PC-9 (cell line): ENCODE measurements at regions of chr7 and their contacts with region 1.

Region 1: DNA sequence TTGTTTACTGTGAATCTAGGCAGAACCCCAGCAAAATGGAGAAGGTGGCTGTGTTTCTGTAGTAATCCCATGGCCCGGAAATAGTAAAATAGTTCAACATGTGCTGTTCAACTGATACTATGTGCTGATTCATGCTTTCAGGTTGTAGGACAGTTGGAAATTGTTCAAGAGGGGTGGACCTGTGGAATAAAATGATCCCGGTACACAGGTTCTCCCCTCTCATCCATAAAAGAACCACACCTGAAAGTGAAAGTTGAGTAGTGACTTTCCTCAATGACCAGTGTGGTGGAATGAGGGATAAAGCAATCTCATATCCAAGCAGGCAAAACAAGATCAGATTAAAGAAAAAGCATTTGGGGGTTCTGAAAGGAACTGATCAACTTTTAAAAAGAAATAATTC is 177.1 kb downstream of the POU6F2 start:
- DNase-seq: no peak
- H3K4me3 ChIP-seq: no peak overlapping the region
- H3K27ac ChIP-seq: no peak overlapping the region
- H3K4me1 ChIP-seq: no peaks in the 10 kb centered on the region
- H3K27me3 ChIP-seq: peaks cover 73% of the 10 kb centered on the region
- CTCF ChIP-seq: no peak

Region 2: GRCh38 chr7:39228946-39229345 is 74.1 kb after region 1 on chr7:
- CTCF ChIA-PET with region 1: no interaction called
- POLR2A ChIA-PET with region 1: interaction called, 40 read pairs
- intact Hi-C with region 1: no loop called
- DNase-seq: no peak
- H3K4me3 ChIP-seq: no peak overlapping the region
- H3K27ac ChIP-seq: no peak overlapping the region
- H3K4me1 ChIP-seq: no peaks in the 10 kb centered on the region
- H3K27me3 ChIP-seq: peaks cover 48% of the 10 kb centered on the region
- CTCF ChIP-seq: no peak